HepG2 (cell line): ENCODE measurements at regions of chr1 and their contacts with region 1.

Region 1: DNA sequence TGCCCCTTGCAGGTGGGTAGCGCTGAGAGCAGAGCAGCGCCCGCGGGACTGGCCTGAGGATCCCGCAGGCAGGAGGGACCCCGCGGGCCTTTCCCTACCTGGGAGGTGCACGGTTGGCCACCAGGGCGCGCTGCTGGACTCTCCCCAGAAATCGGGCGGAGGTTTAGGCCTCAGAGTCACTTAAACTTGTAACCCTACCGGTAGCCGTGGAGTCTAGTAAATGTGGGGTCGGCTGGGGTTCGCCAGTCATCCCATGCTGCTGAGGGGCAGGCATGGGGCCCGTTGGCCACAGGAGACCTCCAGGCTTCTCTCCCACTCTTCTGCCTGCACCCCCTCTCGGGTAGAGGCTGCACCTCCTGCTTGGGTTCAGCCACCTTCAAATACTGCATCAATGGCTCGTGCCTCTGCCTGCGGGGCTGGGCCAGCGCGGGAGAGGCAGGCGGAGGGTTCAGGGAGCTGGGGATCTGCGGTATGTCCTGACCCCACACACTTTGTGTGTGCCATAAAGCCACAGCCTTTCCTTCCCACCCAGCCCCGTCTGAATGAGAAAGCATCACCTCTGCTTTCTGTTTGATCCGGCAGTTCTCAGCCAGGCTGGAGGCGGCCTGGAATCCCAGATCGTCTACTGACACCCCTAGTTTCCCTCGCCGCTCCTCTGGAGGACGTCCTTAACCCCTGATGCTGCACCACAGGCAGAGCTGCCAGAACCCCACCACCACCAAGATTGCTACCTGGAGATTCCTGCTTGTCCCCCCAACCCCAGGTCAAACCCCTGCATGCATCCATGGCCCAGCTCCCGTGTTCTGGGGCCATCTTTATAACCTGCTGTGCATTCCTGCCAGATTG is 12.3 kb upstream of the GSTM4 start:
- DNase-seq: peak; percentile 67
- ATAC-seq: peak; percentile 92
- H3K4me3 ChIP-seq: peak overlapping the region; percentile 34 to 67 (median 48)
- H3K27ac ChIP-seq: no peak overlapping the region
- H3K4me1 ChIP-seq: peaks cover 23% of the 10 kb centered on the region
- H3K27me3 ChIP-seq: 0 out of 5 replicates have a peak, but pooled peaks cover 0 to 3% of the 10 kb centered on the region in 2 experiments
- CTCF ChIP-seq: peak; percentile 94
- EP300 ChIP-seq: 0 out of 4 replicates have a peak, but pooled peaks of 1 of the 2 experiments have one; percentile 5
- POLR2A ChIP-seq: no peak
- RAD21 ChIP-seq: peak; percentile 90

Region 2: DNA sequence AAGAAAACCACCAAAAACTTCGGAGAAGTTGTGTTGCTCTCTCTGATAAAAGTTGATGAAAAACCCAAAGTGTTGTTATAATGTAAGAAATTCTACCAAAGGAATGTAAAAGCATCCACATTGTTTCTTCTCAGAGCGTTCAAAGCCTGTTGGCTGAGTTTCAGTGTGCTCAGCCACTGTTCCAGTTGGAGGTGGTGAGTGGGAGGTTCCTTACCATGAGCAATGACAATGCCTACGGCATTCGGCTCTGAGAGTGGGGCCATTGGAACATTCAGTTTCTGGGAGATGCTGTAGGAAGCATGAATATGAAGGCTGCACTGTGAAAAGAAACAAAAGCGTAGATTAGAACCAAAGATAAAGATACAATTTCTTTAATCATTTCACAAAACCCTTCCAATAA is 316.3 kb before region 1 on chr1:
- CTCF ChIA-PET with region 1: no interaction called
- POLR2A ChIA-PET with region 1: no interaction called
- in situ Hi-C with region 1: no loop called
- intact Hi-C with region 1: no loop called
- DNase-seq: no peak
- ATAC-seq: no peak
- H3K4me3 ChIP-seq: no peak overlapping the region
- H3K27ac ChIP-seq: no peak overlapping the region
- H3K4me1 ChIP-seq: no peaks in the 10 kb centered on the region
- H3K27me3 ChIP-seq: no peaks in the 10 kb centered on the region
- CTCF ChIP-seq: no peak
- EP300 ChIP-seq: no peak
- POLR2A ChIP-seq: no peak
- RAD21 ChIP-seq: no peak

Region 3: GRCh38 chr1:109655601-109656519 is 12.3 kb after region 1 on chr1 and contains the start of gene GSTM4:
- CTCF ChIA-PET with region 1: no interaction called
- POLR2A ChIA-PET with region 1: interaction called, 12 read pairs
- in situ Hi-C with region 1: no loop called
- intact Hi-C with region 1: no loop called
- DNase-seq: peak; percentile 59
- ATAC-seq: peak; percentile 97
- H3K4me3 ChIP-seq: peak within 1 kb of the TSS; percentile 83 to 88 (median 86)
- H3K27ac ChIP-seq: peak within 1 kb of the TSS; percentile 59
- H3K4me1 ChIP-seq: peaks cover 35% of the 10 kb centered on the region
- H3K27me3 ChIP-seq: 0 out of 5 replicates have a peak, but pooled peaks cover 0 to 4% of the 10 kb centered on the region in 2 experiments
- CTCF ChIP-seq: peak; percentile 55; the same call in 1 of the 2 replicates
- EP300 ChIP-seq: no peak
- POLR2A ChIP-seq: peak in 1 of 2 experiments; percentile 85; a peak in 2 of 4 replicates
- RAD21 ChIP-seq: no peak
- total RNA-seq, gene GSTM4: 25.3 and 30.6 TPM in 2 replicates

Region 4: DNA sequence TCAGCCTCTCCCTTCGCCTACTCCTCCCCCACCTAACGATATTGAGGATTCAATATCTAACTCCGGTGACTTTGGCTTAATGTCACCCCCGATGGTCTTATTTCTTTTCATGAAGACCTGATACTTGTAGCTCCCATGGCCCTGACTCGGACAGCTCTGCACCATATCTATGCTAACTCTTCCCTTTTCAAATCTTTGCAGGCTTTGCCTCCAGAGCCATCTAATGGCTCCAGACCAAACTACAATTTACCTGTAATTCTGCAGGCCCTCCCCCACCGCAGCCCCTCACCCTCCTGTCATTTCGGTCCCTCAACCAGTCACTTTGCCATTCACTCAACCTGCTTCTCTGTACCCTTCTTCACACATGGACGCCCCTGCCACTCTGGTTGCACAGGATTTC is 60.6 kb after region 1 on chr1:
- CTCF ChIA-PET with region 1: interaction called, 11 read pairs
- POLR2A ChIA-PET with region 1: no interaction called
- in situ Hi-C with region 1: loop called (anchors 5 kb)
- intact Hi-C with region 1: loop called (anchors 2 kb)
- DNase-seq: peak; percentile 19
- ATAC-seq: peak; percentile 74
- H3K4me3 ChIP-seq: no peak overlapping the region
- H3K27ac ChIP-seq: no peak overlapping the region
- H3K4me1 ChIP-seq: no peaks in the 10 kb centered on the region
- H3K27me3 ChIP-seq: peaks cover 2 to 13% of the 10 kb centered on the region in 2 experiments; a peak in 2 of 5 replicates
- CTCF ChIP-seq: peak; percentile 66
- EP300 ChIP-seq: no peak
- POLR2A ChIP-seq: no peak
- RAD21 ChIP-seq: no peak

Region 5: GRCh38 chr1:109877320-109877771 is 233.7 kb after region 1 on chr1:
- CTCF ChIA-PET with region 1: no interaction called
- POLR2A ChIA-PET with region 1: no interaction called
- in situ Hi-C with region 1: no loop called
- intact Hi-C with region 1: no loop called
- DNase-seq: peak; percentile 79
- ATAC-seq: peak; percentile 96
- H3K4me3 ChIP-seq: peak overlapping the region; percentile 33 to 72 (median 51)
- H3K27ac ChIP-seq: no peak overlapping the region
- H3K4me1 ChIP-seq: peaks cover 88% of the 10 kb centered on the region
- H3K27me3 ChIP-seq: no peaks in the 10 kb centered on the region; a peak in 1 of 5 replicates
- CTCF ChIP-seq: peak; percentile 58
- EP300 ChIP-seq: 0 out of 4 replicates have a peak, but pooled peaks of 1 of the 2 experiments have one; percentile 7
- POLR2A ChIP-seq: no peak
- RAD21 ChIP-seq: 0 out of 2 replicates have a peak, but pooled peaks have one; percentile 29

Region 6: GRCh38 chr1:109993885-109994284 is 350.3 kb after region 1 on chr1:
- CTCF ChIA-PET with region 1: no interaction called
- POLR2A ChIA-PET with region 1: no interaction called
- in situ Hi-C with region 1: loop called (anchors 10 kb)
- intact Hi-C with region 1: loop called (anchors 5 kb)
- DNase-seq: no peak
- ATAC-seq: no peak
- H3K4me3 ChIP-seq: no peak overlapping the region
- H3K27ac ChIP-seq: no peak overlapping the region
- H3K4me1 ChIP-seq: peaks cover 35% of the 10 kb centered on the region
- H3K27me3 ChIP-seq: no peaks in the 10 kb centered on the region
- CTCF ChIP-seq: no peak
- EP300 ChIP-seq: no peak
- POLR2A ChIP-seq: no peak
- RAD21 ChIP-seq: no peak